ENCODE measurements at regions of chr16 and their contacts with region 1.

Region 1: DNA sequence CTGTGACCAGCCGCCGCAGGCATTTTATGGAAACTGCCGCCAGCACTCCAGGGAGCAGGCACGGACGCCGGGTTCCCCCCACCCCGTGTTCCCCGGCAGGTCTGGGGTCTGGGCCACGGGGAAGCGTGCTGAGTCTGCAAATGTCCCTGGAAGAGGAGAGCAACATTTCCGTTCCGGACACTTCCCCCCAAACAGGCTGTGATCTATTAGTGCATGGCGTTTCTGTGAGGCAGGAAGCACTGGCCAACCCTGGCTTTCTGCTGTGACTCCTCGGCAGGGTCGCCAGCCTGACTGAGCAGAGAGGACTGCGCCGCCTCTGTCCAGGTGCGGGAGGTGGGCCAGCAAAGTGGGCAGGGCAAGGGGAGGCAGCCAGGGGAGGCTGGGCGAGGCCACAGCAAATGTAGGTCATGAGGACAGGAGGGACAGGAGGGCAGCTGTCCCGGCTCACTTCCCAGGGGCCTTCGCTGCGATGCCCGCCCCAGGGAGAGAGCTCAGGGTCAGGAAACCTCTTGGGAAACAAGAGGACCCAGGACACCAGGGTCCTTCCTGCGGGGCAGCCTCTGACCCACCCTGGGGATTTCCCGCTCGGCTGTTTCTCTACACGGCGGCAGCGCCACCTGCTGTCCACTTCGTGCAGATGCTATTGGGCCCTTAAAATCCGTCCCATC is 9.5 kb downstream of the FOXF1 start:
- DNase-seq: no peak
- H3K4me3 ChIP-seq: no peak overlapping the region
- H3K27ac ChIP-seq: no peak overlapping the region
- H3K4me1 ChIP-seq: no peaks in the 10 kb centered on the region
- H3K27me3 ChIP-seq: peaks cover 28% of the 10 kb centered on the region
- CTCF ChIP-seq: peak; percentile 83 to 89

Region 2: GRCh38 chr16:86343027-86343787 is 176.6 kb before region 1 on chr16:
- CTCF ChIA-PET with region 1: interaction called, 3 read pairs
- dilution Hi-C with region 1: no loop called
- in situ Hi-C with region 1: no loop called
- intact Hi-C with region 1: loop called (anchors 1 kb)
- DNase-seq: peak; percentile 21
- H3K4me3 ChIP-seq: no peak overlapping the region
- H3K27ac ChIP-seq: no peak overlapping the region
- H3K4me1 ChIP-seq: no peaks in the 10 kb centered on the region
- H3K27me3 ChIP-seq: peaks cover 3% of the 10 kb centered on the region
- CTCF ChIP-seq: no peak